Activated CD4-positive, alpha-beta T cell treated with anti-CD3 and anti-CD28 coated beads for 36 hours (primary cell): ENCODE measurements at regions of chr10 and their contacts with region 1.

Region 1: GRCh38 chr10:59906417-59907202 is at the start of gene CCDC6:
- DNase-seq: peak; percentile 97
- ATAC-seq: peak; percentile 82
- H3K4me3 Mint-ChIP-seq: peak within 1 kb of the TSS; percentile 97
- H3K27ac Mint-ChIP-seq: peak within 1 kb of the TSS; percentile 99
- H3K4me1 Mint-ChIP-seq: peaks cover 64% of the 10 kb centered on the region
- H3K27me3 Mint-ChIP-seq: no peaks in the 10 kb centered on the region
- total RNA-seq, gene CCDC6: 49.7 to 53.0 TPM

Region 2: GRCh38 chr10:58384999-58385783 is 1521.4 kb before region 1 on chr10 and contains the start of gene TFAM:
- CTCF ChIA-PET with region 1: no interaction called
- POLR2A ChIA-PET with region 1: no interaction called
- intact Hi-C with region 1: loop called in 1 of 2 experiments (anchors 5 kb)
- DNase-seq: peak; percentile 98
- ATAC-seq: peak; percentile 91
- H3K4me3 Mint-ChIP-seq: peak within 1 kb of the TSS; percentile 100
- H3K27ac Mint-ChIP-seq: peak within 1 kb of the TSS; percentile 97
- H3K4me1 Mint-ChIP-seq: peaks cover 44% of the 10 kb centered on the region
- H3K27me3 Mint-ChIP-seq: no peaks in the 10 kb centered on the region
- total RNA-seq, gene TFAM: 108 to 112 TPM

Region 3: DNA sequence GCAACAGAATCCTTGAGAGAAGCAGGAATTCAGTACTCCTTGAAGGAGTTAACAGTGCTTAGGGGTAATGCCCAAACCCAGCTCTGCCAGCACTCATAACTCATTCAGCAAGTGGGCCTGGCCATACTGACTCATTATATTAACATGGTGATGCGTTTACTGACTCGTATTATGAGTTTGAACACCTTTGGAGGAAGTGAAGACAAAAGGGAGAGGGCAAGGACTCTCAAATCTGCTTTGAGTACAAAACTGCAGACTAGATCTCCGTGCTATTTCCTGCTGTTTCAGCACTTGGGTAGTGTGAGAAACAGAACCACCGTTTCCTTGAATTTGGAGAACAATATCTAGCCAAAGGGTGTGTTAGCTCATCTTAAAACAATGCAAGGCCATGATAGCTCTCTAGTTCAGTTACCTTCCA is 227.7 kb before region 1 on chr10:
- CTCF ChIA-PET with region 1: no interaction called
- POLR2A ChIA-PET with region 1: no interaction called
- intact Hi-C with region 1: no loop called
- DNase-seq: peak; percentile 39
- ATAC-seq: peak; percentile 91
- H3K4me3 Mint-ChIP-seq: no peak overlapping the region
- H3K27ac Mint-ChIP-seq: no peak overlapping the region
- H3K4me1 Mint-ChIP-seq: peaks cover 3% of the 10 kb centered on the region
- H3K27me3 Mint-ChIP-seq: no peaks in the 10 kb centered on the region

Region 4: DNA sequence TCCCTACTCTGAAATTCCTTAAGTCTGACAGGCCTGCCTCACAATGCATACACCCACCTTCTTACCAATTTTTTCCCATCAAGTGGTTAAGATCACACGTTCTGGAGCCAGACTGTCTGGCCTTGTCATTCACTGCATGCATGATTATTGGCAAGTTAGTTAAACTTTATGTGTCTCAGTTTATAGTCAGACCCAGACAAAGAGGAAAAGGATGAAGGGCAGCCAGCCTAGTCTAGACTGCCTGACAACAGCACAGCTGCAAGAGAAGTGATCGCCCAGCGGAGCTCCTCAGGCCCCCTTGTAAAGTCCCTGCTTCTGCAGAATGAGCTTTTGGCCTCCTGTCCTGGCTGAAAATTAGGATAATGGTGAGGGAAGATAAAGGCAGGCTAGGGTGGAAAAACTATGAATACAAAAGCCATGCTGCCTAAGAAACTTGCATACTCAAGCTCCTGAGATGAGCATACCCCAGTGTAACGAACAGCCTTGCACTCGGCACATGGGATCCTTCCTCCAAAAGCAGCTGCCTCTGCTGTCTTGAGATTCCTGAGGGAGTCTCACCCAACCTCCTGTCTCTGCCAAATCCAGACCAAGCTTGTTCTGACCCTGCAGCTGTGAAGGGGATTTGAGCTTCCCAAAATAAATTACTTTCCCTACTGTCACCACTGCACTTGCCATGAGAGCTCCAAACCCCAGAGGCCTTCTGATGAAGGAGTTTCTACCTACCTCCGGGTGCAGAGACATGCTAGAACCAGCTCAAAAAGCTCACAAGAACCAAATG is 126.7 kb before region 1 on chr10:
- CTCF ChIA-PET with region 1: no interaction called
- POLR2A ChIA-PET with region 1: no interaction called
- intact Hi-C with region 1: no loop called
- DNase-seq: no peak
- ATAC-seq: no peak
- H3K4me3 Mint-ChIP-seq: no peak overlapping the region
- H3K27ac Mint-ChIP-seq: no peak overlapping the region
- H3K4me1 Mint-ChIP-seq: no peaks in the 10 kb centered on the region
- H3K27me3 Mint-ChIP-seq: peaks cover 2% of the 10 kb centered on the region

Region 5: DNA sequence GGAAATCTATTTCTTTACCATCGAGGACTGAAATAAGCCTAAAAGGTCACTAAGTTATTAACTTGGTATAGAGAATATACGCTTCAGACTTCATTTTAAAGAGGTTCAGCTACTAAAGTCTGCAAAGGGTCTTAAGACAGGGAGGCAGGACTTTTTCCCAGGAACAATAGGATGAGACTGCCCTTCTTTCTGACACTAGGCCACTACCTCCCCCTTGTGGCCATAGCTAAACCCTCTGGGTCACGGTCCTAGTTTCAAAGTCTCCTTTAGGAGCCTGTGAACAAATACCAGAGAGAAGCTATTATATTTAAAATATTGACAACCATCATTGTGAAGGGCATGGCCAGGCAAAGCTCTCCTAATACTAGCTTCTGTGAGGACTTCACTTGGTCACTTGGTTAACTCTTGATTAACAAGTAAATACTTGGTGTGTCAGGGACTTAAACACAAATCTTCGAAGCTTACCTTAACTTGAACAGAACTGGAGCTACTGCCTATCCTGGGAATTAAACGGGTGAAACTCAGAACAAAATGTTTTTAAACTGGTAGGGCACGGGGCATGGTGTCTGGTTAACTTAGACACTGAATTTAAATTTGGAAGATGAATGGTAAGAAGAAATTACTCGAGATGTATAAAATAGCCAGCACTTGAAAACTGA is 75.9 kb before region 1 on chr10:
- CTCF ChIA-PET with region 1: interaction called, 8 read pairs
- POLR2A ChIA-PET with region 1: no interaction called
- intact Hi-C with region 1: loop called (anchors 2 kb)
- DNase-seq: peak; percentile 44
- ATAC-seq: no peak
- H3K4me3 Mint-ChIP-seq: no peak overlapping the region
- H3K27ac Mint-ChIP-seq: no peak overlapping the region
- H3K4me1 Mint-ChIP-seq: peaks cover 40% of the 10 kb centered on the region
- H3K27me3 Mint-ChIP-seq: no peaks in the 10 kb centered on the region

Region 6: GRCh38 chr10:59895629-59896116 is 10.9 kb before region 1 on chr10:
- CTCF ChIA-PET with region 1: interaction called, 7 read pairs
- POLR2A ChIA-PET with region 1: interaction called, 4 read pairs
- intact Hi-C with region 1: loop called in 1 of 2 experiments (anchors 1 kb)
- DNase-seq: no peak
- ATAC-seq: no peak
- H3K4me3 Mint-ChIP-seq: no peak overlapping the region
- H3K27ac Mint-ChIP-seq: no peak overlapping the region
- H3K4me1 Mint-ChIP-seq: peaks cover 69% of the 10 kb centered on the region
- H3K27me3 Mint-ChIP-seq: no peaks in the 10 kb centered on the region

Region 7: DNA sequence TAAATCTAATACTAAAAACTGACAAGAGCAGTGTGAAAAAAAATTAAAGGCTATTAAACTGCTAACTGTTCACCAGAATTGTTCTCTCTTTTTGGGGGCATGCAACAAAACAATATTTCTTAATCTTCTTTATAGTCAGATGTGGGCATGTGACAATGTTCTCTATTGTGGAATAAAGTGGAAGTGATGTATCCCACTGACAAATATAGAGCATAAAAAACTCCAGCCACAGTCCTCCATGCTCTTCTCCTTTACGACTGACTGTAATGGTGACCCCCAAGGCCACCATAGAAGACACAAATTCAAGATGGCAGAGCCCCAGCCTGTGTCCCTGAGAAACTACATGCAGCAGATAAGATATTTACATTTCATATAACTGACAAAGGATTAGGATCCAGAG is 11.3 kb after region 1 on chr10:
- CTCF ChIA-PET with region 1: no interaction called
- POLR2A ChIA-PET with region 1: no interaction called
- intact Hi-C with region 1: no loop called
- DNase-seq: no peak
- ATAC-seq: no peak
- H3K4me3 Mint-ChIP-seq: no peak overlapping the region
- H3K27ac Mint-ChIP-seq: no peak overlapping the region
- H3K4me1 Mint-ChIP-seq: no peaks in the 10 kb centered on the region
- H3K27me3 Mint-ChIP-seq: peaks cover 5% of the 10 kb centered on the region

Region 8: GRCh38 chr10:60271319-60272040 is 364.9 kb after region 1 on chr10:
- CTCF ChIA-PET with region 1: no interaction called
- POLR2A ChIA-PET with region 1: no interaction called
- intact Hi-C with region 1: no loop called
- DNase-seq: no peak
- ATAC-seq: no peak
- H3K4me3 Mint-ChIP-seq: no peak overlapping the region
- H3K27ac Mint-ChIP-seq: no peak overlapping the region
- H3K4me1 Mint-ChIP-seq: no peaks in the 10 kb centered on the region
- H3K27me3 Mint-ChIP-seq: no peaks in the 10 kb centered on the region

Region 9: DNA sequence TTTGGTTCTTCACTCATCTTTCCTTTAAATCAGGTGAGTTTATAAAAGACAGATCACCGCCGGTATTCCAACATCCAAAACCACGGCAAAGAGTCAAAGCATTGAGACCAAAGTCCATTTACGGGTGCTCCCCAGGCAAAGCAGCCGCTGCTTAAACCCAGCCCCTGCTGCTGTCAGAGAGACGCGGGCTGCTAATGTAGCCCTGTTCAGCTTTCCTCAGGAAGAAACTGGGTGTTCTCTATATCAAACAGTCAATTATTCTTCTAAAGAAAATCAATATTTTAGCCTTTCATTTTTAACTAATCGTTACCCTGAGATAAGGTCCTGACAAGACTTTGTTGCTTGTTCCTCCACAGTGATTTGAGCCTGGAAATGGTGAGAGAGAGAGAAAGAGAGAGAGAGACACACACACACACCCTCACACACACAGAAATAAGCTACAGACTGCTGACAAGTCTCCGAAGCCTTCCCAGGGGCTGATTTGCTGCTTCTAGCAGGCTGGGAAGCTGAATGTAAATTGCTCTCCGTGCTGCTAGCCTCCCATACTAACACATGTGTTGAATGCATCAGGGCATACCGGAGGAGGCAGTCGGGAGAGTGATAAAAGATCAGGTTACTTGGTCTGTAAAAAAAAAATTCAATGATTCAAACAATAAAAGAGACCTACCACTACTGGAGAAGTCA is 666.0 kb after region 1 on chr10:
- CTCF ChIA-PET with region 1: no interaction called
- POLR2A ChIA-PET with region 1: no interaction called
- intact Hi-C with region 1: loop called in 1 of 2 experiments (anchors 5 kb)
- DNase-seq: peak; percentile 71
- ATAC-seq: peak; percentile 62
- H3K4me3 Mint-ChIP-seq: peak overlapping the region; percentile 78
- H3K27ac Mint-ChIP-seq: peak overlapping the region; percentile 93
- H3K4me1 Mint-ChIP-seq: peaks cover 54% of the 10 kb centered on the region
- H3K27me3 Mint-ChIP-seq: no peaks in the 10 kb centered on the region

Region 10: DNA sequence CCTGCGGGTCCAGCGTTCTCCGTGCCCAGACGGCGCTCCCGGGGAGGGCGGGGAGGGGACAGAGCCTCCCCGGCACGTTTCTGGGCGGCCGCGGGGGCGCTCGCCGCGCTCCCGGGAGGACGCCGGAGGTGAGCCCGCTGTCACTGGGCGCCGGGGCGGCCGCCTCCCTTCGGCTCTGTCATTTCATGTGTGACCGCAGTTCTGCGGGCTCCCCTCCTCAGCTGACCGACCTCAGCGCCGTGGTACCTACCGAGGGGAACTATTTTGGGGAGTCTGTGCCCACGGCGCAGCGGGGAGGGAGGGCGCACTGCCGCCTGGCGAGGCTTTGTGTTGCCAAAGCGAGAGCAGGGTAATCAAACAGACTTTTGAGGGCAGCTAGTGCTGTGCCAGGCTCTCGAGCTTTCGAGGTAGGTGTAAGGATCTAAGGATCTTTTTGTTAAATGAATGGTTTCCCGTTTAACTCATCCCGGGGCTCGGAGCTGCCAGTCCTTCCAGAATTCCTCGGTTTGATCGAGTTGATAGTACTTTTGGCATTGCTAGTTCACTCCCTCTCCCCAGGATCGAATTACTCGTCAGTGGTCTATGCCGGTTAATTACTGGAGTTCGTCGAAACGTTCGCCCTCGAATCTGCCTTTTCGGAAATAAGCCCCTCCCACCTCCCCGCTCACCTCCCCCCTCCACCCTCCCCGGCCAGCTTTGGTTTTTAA is 1996.8 kb after region 1 on chr10:
- CTCF ChIA-PET with region 1: no interaction called
- POLR2A ChIA-PET with region 1: no interaction called
- intact Hi-C with region 1: loop called in 1 of 2 experiments (anchors 5 kb)
- DNase-seq: peak; percentile 86
- ATAC-seq: peak; percentile 46
- H3K4me3 Mint-ChIP-seq: peak overlapping the region; percentile 94
- H3K27ac Mint-ChIP-seq: peak overlapping the region; percentile 100
- H3K4me1 Mint-ChIP-seq: peaks cover 40% of the 10 kb centered on the region
- H3K27me3 Mint-ChIP-seq: no peaks in the 10 kb centered on the region